CD8-positive, alpha-beta memory T cell (primary cell): ENCODE measurements at regions of chr1 and their contacts with region 1.

Region 1: GRCh38 chr1:204398217-204399081 is 13.2 kb downstream of the PPP1R15B start:
- DNase-seq: peak in 4 of 5 donors; percentile 39 to 73 (median 64)
- H3K4me3 ChIP-seq: no peak overlapping the region
- H3K4me3 Mint-ChIP-seq: no peak overlapping the region
- H3K27ac ChIP-seq: no peak overlapping the region
- H3K27ac Mint-ChIP-seq: peak overlapping the region; percentile 64 to 90 (median 78)
- H3K4me1 ChIP-seq: no peaks in the 10 kb centered on the region
- H3K4me1 Mint-ChIP-seq: peaks cover 3 to 25% (median 7%) of the 10 kb centered on the region in 3 donors
- H3K27me3 ChIP-seq: no peaks in the 10 kb centered on the region
- H3K27me3 Mint-ChIP-seq: no peaks in the 10 kb centered on the region

Region 2: DNA sequence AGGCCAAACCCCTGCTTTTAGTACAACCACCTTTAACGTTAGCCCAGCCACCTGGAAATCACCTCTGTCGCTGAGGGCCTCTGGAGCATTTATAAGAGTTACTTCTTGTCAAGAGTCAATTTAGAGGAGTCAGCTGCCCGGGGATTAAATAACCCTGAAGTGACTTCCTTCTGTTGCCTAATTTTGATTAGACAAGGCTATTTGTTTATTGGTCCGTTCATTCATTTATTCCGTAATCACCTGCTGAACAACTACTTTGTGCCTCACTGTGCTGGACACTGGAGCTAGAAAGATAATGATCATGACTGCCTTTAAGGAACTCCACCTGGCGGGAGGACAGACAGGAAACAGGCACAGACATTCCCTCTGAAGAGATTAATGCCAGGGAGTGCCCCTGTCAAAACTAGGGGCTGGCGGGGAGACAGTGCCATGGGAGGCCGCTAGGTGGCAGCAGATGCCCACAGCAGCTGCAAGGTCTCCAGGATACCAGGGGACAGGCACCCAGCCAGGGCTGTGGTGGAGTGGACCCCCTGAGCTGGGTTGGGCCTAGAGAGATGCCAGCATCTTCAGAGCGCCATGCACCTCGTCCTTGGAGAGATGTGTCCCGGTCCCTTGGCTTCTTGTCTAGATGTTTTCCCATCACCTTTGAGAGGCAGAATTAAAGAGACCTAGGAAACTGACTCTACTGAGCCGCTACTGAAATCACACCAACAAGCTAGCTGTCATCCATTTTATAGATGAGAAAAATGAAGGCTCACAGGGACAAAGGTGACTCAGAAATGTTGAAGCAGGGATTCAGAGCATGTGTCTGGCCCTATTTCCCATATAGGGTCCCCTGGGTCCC is 236.0 kb before region 1 on chr1:
- CTCF ChIA-PET with region 1: interaction called, 18 read pairs
- POLR2A ChIA-PET with region 1: no interaction called
- DNase-seq: peak; percentile 63 to 80 (median 72)
- H3K4me3 ChIP-seq: no peak overlapping the region
- H3K4me3 Mint-ChIP-seq: no peak overlapping the region
- H3K27ac ChIP-seq: no peak overlapping the region
- H3K27ac Mint-ChIP-seq: no peak overlapping the region
- H3K4me1 ChIP-seq: no peaks in the 10 kb centered on the region
- H3K4me1 Mint-ChIP-seq: no peaks in the 10 kb centered on the region
- H3K27me3 ChIP-seq: no peaks in the 10 kb centered on the region
- H3K27me3 Mint-ChIP-seq: peaks cover 11 to 24% of the 10 kb centered on the region in 2 donors

Region 3: GRCh38 chr1:204363335-204364124 is 34.9 kb before region 1 on chr1:
- CTCF ChIA-PET with region 1: interaction called, 17 read pairs
- POLR2A ChIA-PET with region 1: no interaction called
- DNase-seq: peak; percentile 60 to 82 (median 72)
- H3K4me3 ChIP-seq: peak overlapping the region; percentile 69
- H3K4me3 Mint-ChIP-seq: peak overlapping the region; percentile 22 to 91 (median 80)
- H3K27ac ChIP-seq: peak overlapping the region; percentile 32
- H3K27ac Mint-ChIP-seq: peak overlapping the region in 7 of 8 donors; percentile 49 to 96 (median 88)
- H3K4me1 ChIP-seq: peaks cover 10% of the 10 kb centered on the region
- H3K4me1 Mint-ChIP-seq: peaks cover 2 to 8% (median 6%) of the 10 kb centered on the region in 3 donors
- H3K27me3 ChIP-seq: no peaks in the 10 kb centered on the region
- H3K27me3 Mint-ChIP-seq: peaks cover 2 to 5% of the 10 kb centered on the region in 2 donors

Region 4: GRCh38 chr1:204377795-204378608 is 20.4 kb before region 1 on chr1:
- CTCF ChIA-PET with region 1: interaction called, 23 read pairs
- POLR2A ChIA-PET with region 1: interaction called, 4 read pairs
- DNase-seq: peak; percentile 28 to 59 (median 45)
- H3K4me3 ChIP-seq: peak overlapping the region; percentile 30
- H3K4me3 Mint-ChIP-seq: peak overlapping the region; percentile 82 to 92 (median 85)
- H3K27ac ChIP-seq: no peak overlapping the region
- H3K27ac Mint-ChIP-seq: peak overlapping the region in 5 of 8 donors; percentile 20 to 85 (median 41)
- H3K4me1 ChIP-seq: peaks cover 4% of the 10 kb centered on the region
- H3K4me1 Mint-ChIP-seq: peaks cover 12 to 17% (median 13%) of the 10 kb centered on the region in 3 donors
- H3K27me3 ChIP-seq: no peaks in the 10 kb centered on the region
- H3K27me3 Mint-ChIP-seq: peaks cover 9 to 10% of the 10 kb centered on the region in 2 donors

Region 5: GRCh38 chr1:204383163-204383901 is 15.1 kb before region 1 on chr1:
- CTCF ChIA-PET with region 1: interaction called, 23 read pairs
- POLR2A ChIA-PET with region 1: interaction called, 4 read pairs
- DNase-seq: no peak
- H3K4me3 ChIP-seq: no peak overlapping the region
- H3K4me3 Mint-ChIP-seq: no peak overlapping the region
- H3K27ac ChIP-seq: no peak overlapping the region
- H3K27ac Mint-ChIP-seq: no peak overlapping the region
- H3K4me1 ChIP-seq: peaks cover 3% of the 10 kb centered on the region
- H3K4me1 Mint-ChIP-seq: peaks cover 4 to 7% (median 7%) of the 10 kb centered on the region in 3 donors
- H3K27me3 ChIP-seq: no peaks in the 10 kb centered on the region
- H3K27me3 Mint-ChIP-seq: peaks cover 0 to 3% of the 10 kb centered on the region in 2 donors

Region 6: DNA sequence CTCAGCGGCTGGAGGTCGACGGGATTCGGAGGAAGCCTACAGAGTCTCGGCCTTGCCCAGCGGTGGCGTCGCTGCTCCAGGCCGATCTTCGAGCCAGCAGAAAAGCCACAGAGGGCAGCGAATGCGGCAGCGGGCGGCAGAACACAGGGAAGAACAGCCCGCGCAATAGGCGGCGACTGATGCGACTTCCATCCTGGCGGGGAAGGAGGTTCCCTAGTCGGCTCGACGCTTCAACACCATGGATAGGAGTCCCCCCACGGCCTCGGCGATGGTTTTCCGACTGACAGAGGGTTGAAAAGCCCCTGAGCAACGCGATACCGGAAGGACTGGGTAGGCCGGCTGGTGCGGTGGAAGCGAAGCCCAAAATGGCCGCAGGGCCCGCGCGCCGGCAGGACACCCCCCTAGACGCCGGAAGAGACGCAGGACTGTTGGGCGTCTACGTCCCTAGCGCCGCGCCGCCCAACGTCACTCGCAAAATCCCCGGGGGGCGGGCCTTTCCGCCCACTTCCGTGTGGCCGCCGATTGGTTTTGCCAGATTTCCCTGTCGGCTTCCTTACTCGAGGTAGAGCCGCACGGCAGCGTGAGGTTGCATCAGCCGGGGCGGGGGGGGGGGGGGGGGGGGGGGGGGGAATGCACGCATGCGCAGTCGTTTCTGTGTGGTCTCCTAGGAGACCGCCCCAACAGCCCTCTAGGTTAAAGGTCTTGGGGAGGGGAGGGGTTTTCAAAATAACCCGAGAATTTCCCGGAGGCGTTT is 13.2 kb after region 1 on chr1 and contains the start of gene PPP1R15B:
- CTCF ChIA-PET with region 1: interaction called, 42 read pairs
- POLR2A ChIA-PET with region 1: interaction called, 8 read pairs
- DNase-seq: peak; percentile 94 to 99 (median 98)
- H3K4me3 ChIP-seq: peak within 1 kb of the TSS; percentile 99
- H3K4me3 Mint-ChIP-seq: peak within 1 kb of the TSS; percentile 93 to 100 (median 99)
- H3K27ac ChIP-seq: peak within 1 kb of the TSS; percentile 100
- H3K27ac Mint-ChIP-seq: peak within 1 kb of the TSS; percentile 98 to 100 (median 100)
- H3K4me1 ChIP-seq: peaks cover 5% of the 10 kb centered on the region
- H3K4me1 Mint-ChIP-seq: peaks cover 15 to 19% (median 18%) of the 10 kb centered on the region in 3 donors
- H3K27me3 ChIP-seq: no peaks in the 10 kb centered on the region
- H3K27me3 Mint-ChIP-seq: peaks cover 0 to 4% of the 10 kb centered on the region in 2 donors
- total RNA-seq, gene PPP1R15B: 80.4 to 82.7 TPM

Region 7: DNA sequence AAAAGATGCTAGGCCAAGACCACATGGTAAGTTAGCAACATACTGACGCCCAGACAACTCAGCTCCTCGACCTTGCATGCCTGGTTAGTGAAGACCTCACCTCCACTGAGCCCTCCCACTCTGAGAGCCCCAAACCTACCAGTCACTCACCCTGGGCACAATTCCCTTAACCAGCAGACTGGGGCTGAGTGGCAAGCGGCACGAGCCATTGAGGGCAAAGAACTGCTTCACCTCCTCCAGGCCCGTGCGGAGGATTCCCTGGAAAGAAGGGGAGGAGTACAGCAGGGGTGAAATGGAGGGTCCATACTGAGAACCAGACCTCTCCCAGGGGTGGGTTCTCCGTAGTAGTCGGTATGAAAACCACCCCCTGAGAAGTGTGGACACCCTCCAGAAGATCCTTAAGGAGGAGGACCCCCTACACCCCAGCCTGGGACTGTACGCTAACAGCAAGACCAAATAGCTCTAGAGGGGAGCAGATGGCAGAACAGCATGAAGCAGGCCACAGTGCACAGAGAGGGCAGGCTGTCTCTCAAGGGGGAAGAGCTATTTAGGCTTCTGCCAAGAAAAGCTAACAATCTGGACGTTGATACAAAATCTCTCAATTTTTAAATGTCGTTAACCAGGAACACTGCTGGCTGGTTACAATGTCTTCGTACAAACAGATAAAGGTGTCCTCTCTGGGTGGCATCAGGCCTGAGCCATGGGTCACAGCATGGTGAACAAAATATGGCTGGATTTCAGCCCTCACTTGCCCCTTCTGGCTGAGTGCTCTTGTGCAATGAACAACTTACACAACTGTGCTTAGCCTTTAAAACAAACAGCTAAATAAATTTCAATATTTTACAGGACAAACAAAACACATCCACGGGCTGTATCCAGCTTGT is 44.2 kb after region 1 on chr1:
- CTCF ChIA-PET with region 1: no interaction called
- POLR2A ChIA-PET with region 1: no interaction called
- DNase-seq: no peak
- H3K4me3 ChIP-seq: no peak overlapping the region
- H3K4me3 Mint-ChIP-seq: no peak overlapping the region
- H3K27ac ChIP-seq: no peak overlapping the region
- H3K27ac Mint-ChIP-seq: peak overlapping the region in 1 of 8 donors; percentile 39
- H3K4me1 ChIP-seq: peaks cover 8% of the 10 kb centered on the region
- H3K4me1 Mint-ChIP-seq: peaks cover 3 to 7% (median 7%) of the 10 kb centered on the region in 3 donors
- H3K27me3 ChIP-seq: no peaks in the 10 kb centered on the region
- H3K27me3 Mint-ChIP-seq: no peaks in the 10 kb centered on the region

Region 8: GRCh38 chr1:204494281-204495077 is 96.0 kb after region 1 on chr1 and contains the start of gene PIK3C2B:
- CTCF ChIA-PET with region 1: interaction called, 20 read pairs
- POLR2A ChIA-PET with region 1: no interaction called
- DNase-seq: peak; percentile 54 to 78 (median 69)
- H3K4me3 ChIP-seq: peak within 1 kb of the TSS; percentile 58
- H3K4me3 Mint-ChIP-seq: peak within 1 kb of the TSS; percentile 85 to 97 (median 94)
- H3K27ac ChIP-seq: peak within 1 kb of the TSS; percentile 77
- H3K27ac Mint-ChIP-seq: peak within 1 kb of the TSS; percentile 85 to 99 (median 96)
- H3K4me1 ChIP-seq: peaks cover 30% of the 10 kb centered on the region
- H3K4me1 Mint-ChIP-seq: peaks cover 40 to 57% (median 51%) of the 10 kb centered on the region in 3 donors
- H3K27me3 ChIP-seq: no peaks in the 10 kb centered on the region
- H3K27me3 Mint-ChIP-seq: peaks cover 0 to 2% of the 10 kb centered on the region in 2 donors
- total RNA-seq, gene PIK3C2B: 19.4 to 19.6 TPM